ENCODE measurements at regions of chr17 and their contacts with region 1.

Region 1: DNA sequence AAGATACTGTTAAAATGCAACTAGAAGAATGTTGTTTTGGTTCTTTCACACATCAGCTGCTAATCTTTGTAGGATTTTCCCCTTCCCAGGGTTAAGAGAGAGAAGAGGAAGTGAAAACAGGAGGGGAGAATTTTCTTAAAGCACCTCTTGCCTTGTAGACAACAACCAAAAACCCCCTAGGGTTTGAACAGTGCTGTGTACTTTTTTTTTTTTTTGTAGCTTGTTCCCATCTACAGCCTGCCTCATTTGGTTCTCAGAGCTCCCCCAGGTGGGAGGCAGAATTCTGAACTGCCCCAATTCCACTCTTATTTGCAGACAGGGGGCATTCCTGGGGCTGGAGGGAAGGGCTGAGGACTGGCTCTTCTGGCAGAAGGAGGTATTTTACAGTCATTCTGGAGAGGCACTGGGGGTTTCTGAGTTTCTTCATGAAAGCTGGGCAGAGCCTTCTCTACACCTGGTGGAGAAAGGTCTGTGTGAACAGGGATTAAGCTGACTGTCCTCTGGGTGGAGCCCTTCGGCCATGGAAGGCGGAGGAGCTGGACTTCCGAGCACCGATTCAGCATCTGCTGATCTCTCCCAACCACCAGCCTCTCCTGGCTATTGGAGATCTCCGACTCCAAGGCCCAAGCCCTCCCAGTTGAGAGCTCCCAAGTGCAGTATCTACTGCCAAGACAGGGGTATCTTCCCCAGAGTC is 32.2 kb downstream of the SMARCE1 start:
- DNase-seq: peak; percentile 58
- H3K4me3 ChIP-seq: no peak overlapping the region
- H3K27ac ChIP-seq: no peak overlapping the region
- H3K4me1 ChIP-seq: no peaks in the 10 kb centered on the region
- H3K27me3 ChIP-seq: peaks cover 32% of the 10 kb centered on the region

Region 2: DNA sequence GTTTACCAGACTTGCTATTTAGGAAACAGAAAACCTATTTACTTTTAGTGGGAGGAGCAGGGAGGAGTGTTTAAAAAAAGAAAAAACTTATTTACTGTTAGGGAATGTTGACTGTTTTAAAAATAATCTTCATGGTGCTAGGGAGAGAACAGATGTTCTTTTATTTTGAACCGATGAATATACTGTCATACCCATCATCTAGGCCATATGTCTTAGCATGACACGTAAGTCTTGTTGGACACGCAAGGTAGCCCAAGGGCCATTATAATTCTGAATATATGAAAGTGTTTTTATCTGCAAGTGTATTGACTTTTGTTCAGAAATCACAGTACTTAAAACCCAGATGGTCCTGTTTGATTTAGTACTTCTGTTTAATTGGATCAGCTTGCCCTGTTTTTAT is 384.8 kb before region 1 on chr17:
- in situ Hi-C with region 1: no loop called
- DNase-seq: no peak
- H3K4me3 ChIP-seq: no peak overlapping the region
- H3K27ac ChIP-seq: no peak overlapping the region
- H3K4me1 ChIP-seq: peaks cover under 1% of the 10 kb centered on the region
- H3K27me3 ChIP-seq: no peaks in the 10 kb centered on the region

Region 3: DNA sequence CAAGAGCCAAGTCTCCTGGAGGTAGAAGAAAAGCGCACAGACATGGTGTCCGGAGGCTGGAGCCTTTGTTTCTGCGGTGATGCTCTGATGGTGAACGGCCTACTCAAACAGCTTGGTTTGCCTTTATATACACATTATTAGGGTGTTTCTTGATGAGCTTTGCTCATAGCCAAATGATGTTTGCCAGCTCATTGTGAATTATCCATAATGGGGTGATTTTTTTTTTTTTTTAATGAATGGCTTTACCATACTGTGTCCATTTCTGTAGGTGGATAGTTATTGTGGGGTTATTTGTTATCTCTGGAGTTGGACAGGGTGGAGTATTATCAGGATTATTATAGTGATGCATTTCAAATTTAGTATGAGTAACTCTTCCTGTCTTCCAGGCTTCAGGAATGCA is 167.0 kb after region 1 on chr17 and contains the start of gene KRT27:
- in situ Hi-C with region 1: loop called (anchors 10 kb)
- DNase-seq: no peak
- H3K4me3 ChIP-seq: no peak within 1 kb of the TSS
- H3K27ac ChIP-seq: no peak within 1 kb of the TSS
- H3K4me1 ChIP-seq: no peaks in the 10 kb centered on the region
- H3K27me3 ChIP-seq: peaks cover 31% of the 10 kb centered on the region
- total RNA-seq, gene KRT27: not detected in 2 replicates